Uterus (tissue), 4 donors: ENCODE measurements at regions of chr21 and their contacts with region 1.

Region 1: GRCh38 chr21:36927719-36928117 is 38.8 kb downstream of the HLCS start:
- DNase-seq: peak; percentile 72 to 75
- H3K4me3 ChIP-seq: no peak overlapping the region
- H3K27ac ChIP-seq: no peak overlapping the region
- H3K4me1 ChIP-seq: no peaks in the 10 kb centered on the region
- H3K27me3 ChIP-seq: no peaks in the 10 kb centered on the region
- CTCF ChIP-seq: peak; percentile 67 to 85 (median 78)
- POLR2A ChIP-seq: no peak

Region 2: GRCh38 chr21:36504067-36505058 is 423.4 kb before region 1 on chr21:
- intact Hi-C with region 1: loop called (anchors 5 kb)
- DNase-seq: peak in 1 of 2 donors; percentile 21
- H3K4me3 ChIP-seq: no peak overlapping the region
- H3K27ac ChIP-seq: no peak overlapping the region
- H3K4me1 ChIP-seq: no peaks in the 10 kb centered on the region
- H3K27me3 ChIP-seq: no peaks in the 10 kb centered on the region
- CTCF ChIP-seq: peak; percentile 83 to 88 (median 86)
- POLR2A ChIP-seq: no peak

Region 3: GRCh38 chr21:36792505-36792967 is 135.2 kb before region 1 on chr21:
- intact Hi-C with region 1: no loop called
- DNase-seq: no peak
- H3K4me3 ChIP-seq: no peak overlapping the region
- H3K27ac ChIP-seq: no peak overlapping the region
- H3K4me1 ChIP-seq: no peaks in the 10 kb centered on the region
- H3K27me3 ChIP-seq: no peaks in the 10 kb centered on the region
- CTCF ChIP-seq: no peak
- POLR2A ChIP-seq: no peak